A549 (cell line): ENCODE measurements at regions of chr7 and their contacts with region 1.

Region 1: GRCh38 chr7:74206589-74207120 is 3.2 kb upstream of the LAT2 start:
- DNase-seq: peak; percentile 77
- ATAC-seq: peak; percentile 79 to 81
- H3K4me3 ChIP-seq: no peak overlapping the region
- H3K27ac ChIP-seq: peak overlapping the region; percentile 54 to 70; a peak in 4 of 6 replicates
- H3K4me1 ChIP-seq: peaks cover 19% of the 10 kb centered on the region
- CTCF ChIP-seq: peak; percentile 96
- EP300 ChIP-seq: no peak
- POLR2A ChIP-seq: no peak
- RAD21 ChIP-seq: peak; percentile 91 to 95

Region 2: DNA sequence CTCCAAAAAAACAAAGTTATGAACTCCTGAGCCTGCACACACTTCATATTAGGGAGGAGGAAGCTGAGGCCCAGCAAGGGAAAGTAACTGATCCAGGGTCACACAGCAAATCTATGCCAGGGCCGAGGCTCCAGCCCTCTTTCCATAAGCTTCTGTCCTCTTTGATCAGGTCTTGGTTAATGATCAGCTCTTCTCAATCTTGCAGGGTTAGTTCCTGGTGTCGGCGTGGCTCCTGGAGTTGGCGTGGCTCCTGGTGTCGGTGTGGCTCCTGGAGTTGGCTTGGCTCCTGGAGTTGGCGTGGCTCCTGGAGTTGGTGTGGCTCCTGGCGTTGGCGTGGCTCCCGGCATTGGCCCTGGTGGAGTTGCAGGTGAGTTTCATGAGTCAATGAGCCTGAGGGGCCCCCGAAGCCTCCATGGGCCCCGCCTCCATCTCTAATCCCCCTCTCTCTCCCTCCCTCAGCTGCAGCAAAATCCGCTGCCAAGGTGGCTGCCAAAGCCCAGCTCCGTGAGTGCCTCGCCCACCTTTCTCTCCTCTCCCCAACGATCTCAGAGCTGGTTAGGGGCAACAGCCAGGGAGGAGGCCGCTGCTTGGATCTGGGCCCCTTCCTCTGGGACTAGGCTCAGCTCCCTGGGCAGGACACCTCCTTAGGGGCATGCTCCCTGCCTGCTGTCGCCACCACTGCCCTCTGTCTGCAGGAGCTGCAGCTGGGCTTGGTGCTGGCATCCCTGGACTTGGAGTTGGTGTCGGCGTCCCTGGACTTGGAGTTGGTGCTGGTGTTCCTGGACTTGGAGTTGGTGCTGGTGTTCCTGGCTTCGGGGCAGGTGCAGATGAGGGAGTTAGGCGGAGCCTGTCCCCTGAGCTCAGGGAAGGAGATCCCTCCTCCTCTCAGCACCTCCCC is 146.7 kb before region 1 on chr7:
- CTCF ChIA-PET with region 1: interaction called, 12 read pairs
- POLR2A ChIA-PET with region 1: no interaction called
- DNase-seq: peak; percentile 45 to 67
- ATAC-seq: peak; percentile 66 to 70
- H3K4me3 ChIP-seq: no peak overlapping the region
- H3K27ac ChIP-seq: peak overlapping the region; percentile 56 to 57
- H3K4me1 ChIP-seq: peaks cover 25% of the 10 kb centered on the region
- CTCF ChIP-seq: no peak
- EP300 ChIP-seq: no peak
- POLR2A ChIP-seq: no peak
- RAD21 ChIP-seq: no peak

Region 3: GRCh38 chr7:74183613-74184450 is 22.8 kb before region 1 on chr7:
- CTCF ChIA-PET with region 1: interaction called, 50 read pairs
- POLR2A ChIA-PET with region 1: no interaction called
- DNase-seq: peak; percentile 41 to 55
- ATAC-seq: peak; percentile 73 to 77; a peak in 5 of 6 replicates
- H3K4me3 ChIP-seq: no peak overlapping the region
- H3K27ac ChIP-seq: no peak overlapping the region
- H3K4me1 ChIP-seq: peaks cover 33% of the 10 kb centered on the region
- CTCF ChIP-seq: peak; percentile 52
- EP300 ChIP-seq: no peak
- POLR2A ChIP-seq: no peak
- RAD21 ChIP-seq: peak; percentile 15 to 41; a peak in 2 of 5 replicates

Region 4: DNA sequence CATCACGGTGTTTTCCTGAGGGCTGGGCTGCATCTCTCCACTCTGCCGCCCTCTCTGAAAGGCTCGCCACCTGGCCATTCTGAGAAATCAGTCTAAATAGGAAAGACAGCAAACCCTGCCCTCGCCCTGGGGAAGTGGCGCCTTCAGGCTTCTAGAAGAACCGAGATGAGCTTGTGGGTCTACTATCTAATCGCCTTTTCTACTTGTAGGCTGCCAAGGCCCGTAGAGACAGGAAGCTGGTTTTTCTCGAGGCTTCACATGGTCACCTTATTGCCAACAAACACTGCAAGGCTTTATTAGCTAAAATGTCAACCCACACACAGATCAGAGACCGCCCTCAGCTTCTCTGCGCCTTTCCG is 24.6 kb after region 1 on chr7:
- CTCF ChIA-PET with region 1: interaction called, 29 read pairs
- POLR2A ChIA-PET with region 1: no interaction called
- DNase-seq: no peak
- ATAC-seq: no peak
- H3K4me3 ChIP-seq: no peak overlapping the region
- H3K27ac ChIP-seq: no peak overlapping the region
- H3K4me1 ChIP-seq: no peaks in the 10 kb centered on the region
- CTCF ChIP-seq: no peak
- EP300 ChIP-seq: no peak
- POLR2A ChIP-seq: no peak
- RAD21 ChIP-seq: no peak

Region 5: GRCh38 chr7:74256491-74257408 is 50.1 kb after region 1 on chr7:
- CTCF ChIA-PET with region 1: interaction called, 18 read pairs
- POLR2A ChIA-PET with region 1: no interaction called
- DNase-seq: no peak
- ATAC-seq: no peak
- H3K4me3 ChIP-seq: no peak overlapping the region
- H3K27ac ChIP-seq: no peak overlapping the region
- H3K4me1 ChIP-seq: peaks cover 15% of the 10 kb centered on the region; the same call in 1 of the 3 replicates
- CTCF ChIP-seq: no peak
- EP300 ChIP-seq: no peak
- POLR2A ChIP-seq: no peak
- RAD21 ChIP-seq: no peak

Region 6: DNA sequence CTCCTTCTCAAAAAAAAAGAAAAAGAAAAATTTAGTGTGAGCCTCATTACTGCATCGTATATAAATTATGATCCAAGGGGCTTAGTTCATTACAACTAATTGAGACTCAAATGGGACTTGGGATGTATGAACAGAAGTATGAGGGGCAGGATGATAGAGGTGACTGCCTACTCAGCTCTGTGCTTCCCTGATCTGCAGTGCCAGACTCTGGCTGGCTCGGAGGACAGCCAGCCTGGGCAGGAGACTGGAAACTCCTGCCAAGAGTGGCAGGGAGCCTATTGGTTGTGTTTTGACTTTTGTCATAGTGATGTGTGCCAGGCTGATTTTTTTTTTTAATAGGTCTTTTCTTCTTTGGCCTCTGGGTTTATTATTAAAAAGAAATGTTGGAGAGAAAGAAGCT is 173.3 kb after region 1 on chr7:
- CTCF ChIA-PET with region 1: interaction called, 17 read pairs
- POLR2A ChIA-PET with region 1: no interaction called
- DNase-seq: no peak
- ATAC-seq: peak; percentile 48 to 61; a peak in 4 of 6 replicates
- H3K4me3 ChIP-seq: no peak overlapping the region
- H3K27ac ChIP-seq: no peak overlapping the region
- H3K4me1 ChIP-seq: peaks cover 8% of the 10 kb centered on the region; the same call in 1 of the 3 replicates
- CTCF ChIP-seq: no peak
- EP300 ChIP-seq: no peak
- POLR2A ChIP-seq: no peak
- RAD21 ChIP-seq: no peak

Region 7: GRCh38 chr7:74554178-74554577 is 347.5 kb after region 1 on chr7:
- CTCF ChIA-PET with region 1: no interaction called
- POLR2A ChIA-PET with region 1: no interaction called
- DNase-seq: no peak
- ATAC-seq: peak; percentile 21 to 26; a peak in 3 of 6 replicates
- H3K4me3 ChIP-seq: no peak overlapping the region
- H3K27ac ChIP-seq: no peak overlapping the region
- H3K4me1 ChIP-seq: no peaks in the 10 kb centered on the region
- CTCF ChIP-seq: no peak
- EP300 ChIP-seq: no peak
- POLR2A ChIP-seq: no peak
- RAD21 ChIP-seq: no peak